Activated CD8-positive, alpha-beta T cell treated with anti-CD3 and anti-CD28 coated beads, Interleukin-2, amount 10 ng/mL, durations not matched to agents 7 days and 5 days (primary cell): ENCODE measurements at regions of chr17 and their contacts with region 1.

Region 1: GRCh38 chr17:29148790-29149430 is 31.3 kb downstream of the MYO18A start:
- DNase-seq: peak; percentile 95
- ATAC-seq: peak; percentile 96
- H3K4me3 Mint-ChIP-seq: peak overlapping the region; percentile 72
- H3K27ac Mint-ChIP-seq: peak overlapping the region; percentile 78
- H3K4me1 Mint-ChIP-seq: peaks cover 64% of the 10 kb centered on the region
- H3K27me3 Mint-ChIP-seq: no peaks in the 10 kb centered on the region

Region 2: DNA sequence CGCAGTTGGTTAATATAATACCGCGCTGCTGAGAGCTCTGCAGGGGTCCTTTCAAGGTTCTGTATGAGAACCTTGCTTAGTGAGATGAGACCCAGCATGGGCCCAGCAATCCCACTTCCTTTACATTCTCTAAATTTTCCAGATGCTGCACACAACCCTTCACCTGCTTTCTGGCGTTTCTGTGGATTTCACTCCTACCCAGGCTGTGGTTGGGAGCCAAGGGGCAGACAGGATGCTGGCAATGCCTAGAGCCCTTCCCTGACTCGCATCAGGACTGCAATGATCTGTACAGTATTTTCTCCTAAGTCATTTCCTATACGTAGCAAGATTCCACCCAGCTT is 116.1 kb before region 1 on chr17:
- CTCF ChIA-PET with region 1: no interaction called
- POLR2A ChIA-PET with region 1: no interaction called
- DNase-seq: no peak
- ATAC-seq: no peak
- H3K4me3 Mint-ChIP-seq: no peak overlapping the region
- H3K27ac Mint-ChIP-seq: no peak overlapping the region
- H3K4me1 Mint-ChIP-seq: no peaks in the 10 kb centered on the region
- H3K27me3 Mint-ChIP-seq: peaks cover 55% of the 10 kb centered on the region

Region 3: GRCh38 chr17:29116804-29117772 is 31.8 kb before region 1 on chr17:
- CTCF ChIA-PET with region 1: interaction called, 414 read pairs
- POLR2A ChIA-PET with region 1: interaction called, 4 read pairs
- DNase-seq: peak; percentile 81
- ATAC-seq: peak; percentile 59
- H3K4me3 Mint-ChIP-seq: no peak overlapping the region
- H3K27ac Mint-ChIP-seq: no peak overlapping the region
- H3K4me1 Mint-ChIP-seq: peaks cover 9% of the 10 kb centered on the region
- H3K27me3 Mint-ChIP-seq: no peaks in the 10 kb centered on the region

Region 4: DNA sequence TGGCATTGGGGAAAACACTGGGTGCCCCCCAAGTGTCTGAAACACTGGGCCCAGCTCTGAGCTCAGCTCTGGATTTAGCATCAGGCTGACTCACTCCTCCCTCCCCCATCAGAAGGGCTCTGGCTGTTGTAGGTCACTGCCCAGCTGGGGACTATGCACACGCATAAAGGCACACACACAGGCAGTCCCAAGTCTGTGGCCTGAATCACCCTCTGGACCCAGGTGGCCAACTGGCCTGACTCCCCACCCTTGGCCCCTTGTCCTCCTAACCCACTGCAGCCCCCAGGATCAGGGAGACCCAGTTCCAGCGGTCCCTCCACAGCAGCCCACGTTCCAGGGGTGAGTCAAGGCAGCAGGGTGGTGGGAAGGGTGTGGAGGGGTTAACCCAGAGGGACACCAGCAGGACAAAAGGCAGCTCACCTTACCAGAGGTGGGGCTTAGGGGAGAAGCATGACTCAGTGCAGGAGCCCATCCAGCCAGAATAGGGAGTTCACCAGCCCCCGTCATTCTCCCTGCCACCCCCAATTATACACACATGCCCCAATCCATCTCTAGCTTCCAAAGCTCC is 15.7 kb before region 1 on chr17:
- CTCF ChIA-PET with region 1: interaction called, 66 read pairs
- POLR2A ChIA-PET with region 1: interaction called, 6 read pairs
- DNase-seq: no peak
- ATAC-seq: peak; percentile 15
- H3K4me3 Mint-ChIP-seq: no peak overlapping the region
- H3K27ac Mint-ChIP-seq: peak overlapping the region; percentile 20
- H3K4me1 Mint-ChIP-seq: peaks cover 52% of the 10 kb centered on the region
- H3K27me3 Mint-ChIP-seq: no peaks in the 10 kb centered on the region

Region 5: DNA sequence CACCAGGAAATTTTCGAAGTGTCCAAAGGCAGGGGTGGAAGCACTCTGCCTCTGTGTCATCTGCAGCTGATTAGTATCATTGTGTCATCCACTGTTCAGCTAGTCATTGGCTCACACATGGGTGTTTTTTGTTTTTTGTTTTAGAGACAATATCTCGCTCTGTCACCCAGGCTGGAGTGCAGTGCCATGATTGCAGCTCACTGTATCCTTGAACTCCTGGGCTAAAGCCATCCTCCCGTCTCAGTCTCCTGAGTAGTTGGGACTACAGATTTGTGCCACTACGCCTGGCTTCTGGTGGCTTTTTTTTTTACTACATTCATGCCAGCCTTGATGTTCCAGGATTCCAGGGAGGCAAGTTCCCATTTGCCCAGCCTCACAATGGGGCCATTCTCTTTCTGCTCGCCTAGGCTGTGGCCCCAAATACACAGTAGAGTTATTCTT is 63.8 kb after region 1 on chr17:
- CTCF ChIA-PET with region 1: interaction called, 266 read pairs
- POLR2A ChIA-PET with region 1: no interaction called
- DNase-seq: no peak
- ATAC-seq: no peak
- H3K4me3 Mint-ChIP-seq: no peak overlapping the region
- H3K27ac Mint-ChIP-seq: no peak overlapping the region
- H3K4me1 Mint-ChIP-seq: no peaks in the 10 kb centered on the region
- H3K27me3 Mint-ChIP-seq: no peaks in the 10 kb centered on the region

Region 6: GRCh38 chr17:29241015-29241963 is 92.4 kb after region 1 on chr17:
- CTCF ChIA-PET with region 1: interaction called, 11 read pairs
- POLR2A ChIA-PET with region 1: no interaction called
- DNase-seq: no peak
- ATAC-seq: no peak
- H3K4me3 Mint-ChIP-seq: no peak overlapping the region
- H3K27ac Mint-ChIP-seq: no peak overlapping the region
- H3K4me1 Mint-ChIP-seq: peaks cover 11% of the 10 kb centered on the region
- H3K27me3 Mint-ChIP-seq: no peaks in the 10 kb centered on the region

Region 7: GRCh38 chr17:29293890-29294579 is 145.1 kb after region 1 on chr17 and contains the start of gene NUFIP2:
- CTCF ChIA-PET with region 1: interaction called, 40 read pairs
- POLR2A ChIA-PET with region 1: interaction called, 9 read pairs
- DNase-seq: peak; percentile 99
- ATAC-seq: peak; percentile 92
- H3K4me3 Mint-ChIP-seq: peak within 1 kb of the TSS; percentile 97
- H3K27ac Mint-ChIP-seq: peak within 1 kb of the TSS; percentile 98
- H3K4me1 Mint-ChIP-seq: peaks cover 30% of the 10 kb centered on the region
- H3K27me3 Mint-ChIP-seq: no peaks in the 10 kb centered on the region
- total RNA-seq, gene NUFIP2: 60.3 to 64.5 TPM